ENCODE measurements at regions of chr2 and their contacts with region 1.

Region 1: DNA sequence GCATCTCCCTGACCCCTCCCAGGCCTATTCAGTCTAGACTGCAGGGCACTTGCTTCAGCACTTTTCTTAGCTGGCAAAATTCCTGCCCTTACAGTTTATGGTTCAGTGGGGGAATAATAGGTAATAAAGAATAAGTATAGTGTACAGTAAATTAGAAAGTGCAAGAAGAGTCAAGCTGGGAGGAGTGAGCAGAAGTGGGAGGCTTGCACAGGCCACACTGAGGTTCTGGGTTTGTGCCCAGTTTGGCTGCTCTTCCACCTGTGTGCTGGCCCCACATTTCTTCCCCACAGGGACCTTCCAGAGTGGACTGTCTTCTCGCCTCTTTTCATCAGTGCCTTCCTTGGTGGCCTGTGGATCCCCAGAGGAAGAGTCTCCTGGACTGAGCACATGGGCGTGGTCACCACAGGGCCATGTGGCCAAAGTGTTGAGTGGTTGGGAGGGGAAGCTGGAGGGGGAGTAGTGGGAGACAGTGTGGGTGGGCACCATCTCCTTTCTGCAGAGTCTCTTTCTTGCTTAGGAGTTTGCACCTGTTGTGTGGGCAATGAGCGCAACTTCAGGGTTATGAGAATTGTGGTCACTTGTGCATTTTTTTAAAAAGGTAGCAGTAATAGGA is 128.6 kb upstream of the ZSWIM2 start:
- DNase-seq: no peak
- ATAC-seq: peak; percentile 30

Region 2: GRCh38 chr2:187009483-187010229 is 32.1 kb after region 1 on chr2:
- intact Hi-C with region 1: loop called (anchors 1 kb)
- DNase-seq: no peak
- ATAC-seq: no peak